GM12878 (cell line): ENCODE measurements at regions of chr13 and their contacts with region 1.

Region 1: GRCh38 chr13:94435604-94436226 is 43.8 kb downstream of the DCT start:
- DNase-seq: no peak
- ATAC-seq: peak; percentile 83
- H3K4me3 ChIP-seq: no peak overlapping the region
- H3K27ac ChIP-seq: no peak overlapping the region
- H3K4me1 ChIP-seq: no peaks in the 10 kb centered on the region
- H3K27me3 ChIP-seq: no peaks in the 10 kb centered on the region; a peak in 1 of 4 replicates
- CTCF ChIP-seq: peak; percentile 44 to 62 (median 49); a peak in 4 of 6 replicates
- EP300 ChIP-seq: no peak
- POLR2A ChIP-seq: no peak
- RAD21 ChIP-seq: peak; percentile 79

Region 2: DNA sequence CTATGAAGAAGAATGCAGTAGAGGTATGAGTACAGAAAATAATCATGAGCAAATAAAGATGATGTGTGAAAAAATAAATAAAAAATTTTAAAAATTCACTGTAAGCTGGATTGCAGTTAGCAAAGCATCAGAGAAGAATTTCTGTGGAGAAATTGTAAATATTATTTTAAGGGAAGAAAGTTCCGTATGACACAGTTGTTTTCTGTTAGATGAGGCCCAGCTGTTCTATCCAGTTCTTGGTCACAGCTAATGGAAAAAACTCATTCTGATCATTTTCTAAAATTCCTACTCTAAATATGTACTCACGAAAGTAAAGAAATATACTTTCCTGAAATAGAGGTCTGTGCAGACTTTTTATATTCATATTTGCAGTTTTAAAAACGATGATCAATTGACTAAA is 535.0 kb before region 1 on chr13:
- CTCF ChIA-PET with region 1: no interaction called
- POLR2A ChIA-PET with region 1: no interaction called
- RAD21 ChIA-PET with region 1: no interaction called
- SMC1A ChIA-PET with region 1: no interaction called
- in situ Hi-C with region 1: no loop called
- intact Hi-C with region 1: no loop called
- DNase-seq: no peak
- ATAC-seq: no peak
- H3K4me3 ChIP-seq: no peak overlapping the region
- H3K27ac ChIP-seq: no peak overlapping the region
- H3K4me1 ChIP-seq: no peaks in the 10 kb centered on the region
- H3K27me3 ChIP-seq: no peaks in the 10 kb centered on the region
- CTCF ChIP-seq: no peak
- EP300 ChIP-seq: no peak
- POLR2A ChIP-seq: no peak
- RAD21 ChIP-seq: no peak

Region 3: GRCh38 chr13:94608586-94608985 is 172.9 kb after region 1 on chr13:
- CTCF ChIA-PET with region 1: interaction called, 13 read pairs
- POLR2A ChIA-PET with region 1: no interaction called
- RAD21 ChIA-PET with region 1: interaction called, 5 read pairs
- SMC1A ChIA-PET with region 1: interaction called, 153 read pairs
- in situ Hi-C with region 1: loop called (anchors 5 kb)
- intact Hi-C with region 1: no loop called
- DNase-seq: no peak
- ATAC-seq: no peak
- H3K4me3 ChIP-seq: no peak overlapping the region
- H3K27ac ChIP-seq: no peak overlapping the region
- H3K4me1 ChIP-seq: no peaks in the 10 kb centered on the region
- H3K27me3 ChIP-seq: no peaks in the 10 kb centered on the region
- CTCF ChIP-seq: no peak
- EP300 ChIP-seq: no peak
- POLR2A ChIP-seq: no peak
- RAD21 ChIP-seq: no peak

Region 4: GRCh38 chr13:95267662-95268342 is 832.1 kb after region 1 on chr13:
- CTCF ChIA-PET with region 1: no interaction called
- POLR2A ChIA-PET with region 1: no interaction called
- RAD21 ChIA-PET with region 1: no interaction called
- SMC1A ChIA-PET with region 1: no interaction called
- in situ Hi-C with region 1: no loop called
- intact Hi-C with region 1: no loop called
- DNase-seq: no peak
- ATAC-seq: no peak
- H3K4me3 ChIP-seq: no peak overlapping the region
- H3K27ac ChIP-seq: no peak overlapping the region
- H3K4me1 ChIP-seq: peaks cover 17% of the 10 kb centered on the region
- H3K27me3 ChIP-seq: no peaks in the 10 kb centered on the region
- CTCF ChIP-seq: no peak
- EP300 ChIP-seq: no peak
- POLR2A ChIP-seq: no peak
- RAD21 ChIP-seq: no peak